Esophagus muscularis mucosa (tissue), 4 donors: ENCODE measurements at regions of chr18 and their contacts with region 1.

Region 1: DNA sequence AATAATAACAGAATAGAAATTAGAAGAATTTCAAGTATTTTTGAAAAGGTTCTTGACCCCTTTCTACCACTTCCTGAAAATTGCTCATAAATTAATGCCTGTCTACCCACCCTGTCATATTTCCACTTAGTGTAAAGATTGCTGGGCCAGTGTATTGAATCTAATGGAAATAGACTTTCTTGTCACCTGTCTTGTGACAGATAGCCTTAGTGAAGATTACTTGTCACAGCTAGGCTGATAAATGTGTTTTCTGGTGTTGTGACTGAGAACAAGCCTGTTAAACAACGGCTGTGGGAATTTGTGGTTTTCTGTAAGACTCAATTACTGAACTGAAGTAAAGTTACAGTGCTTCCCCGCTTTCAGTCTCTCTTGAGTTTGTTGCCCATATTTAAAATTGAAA is 37.0 kb downstream of the PIK3C3 start:
- DNase-seq: no peak
- H3K4me3 ChIP-seq: no peak overlapping the region
- H3K27ac ChIP-seq: no peak overlapping the region
- H3K4me1 ChIP-seq: no peaks in the 10 kb centered on the region
- H3K27me3 ChIP-seq: no peaks in the 10 kb centered on the region
- CTCF ChIP-seq: no peak
- EP300 ChIP-seq: no peak
- POLR2A ChIP-seq: no peak

Region 2: GRCh38 chr18:41789001-41789400 is 203.1 kb before region 1 on chr18:
- intact Hi-C with region 1: no loop called
- DNase-seq: no peak
- H3K4me3 ChIP-seq: no peak overlapping the region
- H3K27ac ChIP-seq: no peak overlapping the region
- H3K4me1 ChIP-seq: no peaks in the 10 kb centered on the region
- H3K27me3 ChIP-seq: no peaks in the 10 kb centered on the region
- CTCF ChIP-seq: no peak
- EP300 ChIP-seq: no peak
- POLR2A ChIP-seq: no peak

Region 3: DNA sequence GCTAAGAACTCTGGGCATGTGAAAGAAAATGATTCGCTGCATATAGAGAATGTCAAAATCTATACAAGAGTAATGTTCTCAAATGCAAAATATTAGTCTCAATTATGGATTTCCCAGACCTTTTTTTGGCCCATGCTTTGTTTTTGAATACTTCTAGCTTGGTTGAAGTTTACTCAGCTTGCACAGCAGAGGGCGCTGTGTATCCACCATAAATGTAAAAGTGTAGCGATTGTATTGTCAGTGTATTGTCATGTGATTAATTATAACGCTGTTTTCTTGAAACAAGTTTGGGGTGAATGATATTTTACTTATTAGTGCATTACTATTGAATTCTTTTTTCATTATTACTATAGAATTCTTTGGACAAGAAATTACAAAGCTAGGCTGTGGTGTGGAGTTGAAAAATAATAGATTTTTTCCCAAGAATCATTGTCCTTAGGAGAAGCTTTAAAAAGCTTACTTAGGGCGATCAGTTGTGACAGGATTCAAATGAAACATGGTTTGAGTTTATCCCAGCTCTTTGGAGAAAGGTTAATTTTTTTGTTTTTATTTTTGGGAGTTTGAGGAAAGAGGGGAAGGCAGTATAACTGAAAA is 61.2 kb after region 1 on chr18:
- intact Hi-C with region 1: loop called (anchors 10 kb)
- DNase-seq: no peak
- H3K4me3 ChIP-seq: no peak overlapping the region
- H3K27ac ChIP-seq: no peak overlapping the region
- H3K4me1 ChIP-seq: peaks cover 0 to 8% (median 3%) of the 10 kb centered on the region in 4 donors
- H3K27me3 ChIP-seq: peaks cover 0 to 3% (median 0%) of the 10 kb centered on the region in 4 donors
- CTCF ChIP-seq: peak; percentile 60 to 79 (median 77)
- EP300 ChIP-seq: no peak
- POLR2A ChIP-seq: no peak